PC-9 (cell line): ENCODE measurements at regions of chr3 and their contacts with region 1.

Region 1: DNA sequence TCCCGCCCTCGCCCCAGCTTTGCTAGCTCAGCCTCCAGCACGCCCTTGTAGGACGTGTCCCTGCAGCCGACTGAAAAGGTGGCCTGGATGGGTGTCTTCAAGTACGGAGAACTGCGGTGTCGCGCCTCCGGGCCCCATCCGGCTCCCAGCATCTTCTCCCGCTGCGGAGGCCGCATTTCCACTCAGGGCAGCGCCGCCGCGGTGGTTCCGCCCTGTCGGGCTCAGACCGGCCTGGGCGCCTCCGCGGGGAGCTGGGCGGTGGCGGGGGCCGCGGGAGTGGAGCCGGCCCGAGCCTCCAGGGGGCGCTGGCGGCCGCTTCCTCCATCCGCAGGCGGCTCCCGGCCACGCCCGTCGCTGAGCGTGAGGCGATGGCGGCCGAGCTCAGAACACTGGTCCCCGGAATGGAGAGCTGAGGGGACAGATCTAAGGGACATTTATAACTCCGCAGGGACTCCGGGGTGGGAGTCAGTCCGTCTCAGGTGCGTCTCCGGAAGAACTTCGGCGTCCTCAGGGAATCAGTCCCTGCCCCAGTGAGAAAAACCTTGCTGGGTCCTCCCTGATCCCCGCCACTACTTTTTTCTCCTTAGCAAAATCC is 13.6 kb upstream of the SMCO1 start:
- DNase-seq: peak; percentile 59 to 93
- H3K4me3 ChIP-seq: peak overlapping the region; percentile 66
- H3K27ac ChIP-seq: no peak overlapping the region
- H3K4me1 ChIP-seq: no peaks in the 10 kb centered on the region
- H3K27me3 ChIP-seq: no peaks in the 10 kb centered on the region
- CTCF ChIP-seq: peak; percentile 89

Region 2: GRCh38 chr3:195956571-195956970 is 572.2 kb before region 1 on chr3:
- CTCF ChIA-PET with region 1: no interaction called
- POLR2A ChIA-PET with region 1: interaction called, 20 read pairs
- intact Hi-C with region 1: no loop called
- DNase-seq: peak in 1 of 2 experiments; percentile 29
- H3K4me3 ChIP-seq: no peak overlapping the region
- H3K27ac ChIP-seq: no peak overlapping the region
- H3K4me1 ChIP-seq: peaks cover 13% of the 10 kb centered on the region
- H3K27me3 ChIP-seq: no peaks in the 10 kb centered on the region
- CTCF ChIP-seq: no peak

Region 3: DNA sequence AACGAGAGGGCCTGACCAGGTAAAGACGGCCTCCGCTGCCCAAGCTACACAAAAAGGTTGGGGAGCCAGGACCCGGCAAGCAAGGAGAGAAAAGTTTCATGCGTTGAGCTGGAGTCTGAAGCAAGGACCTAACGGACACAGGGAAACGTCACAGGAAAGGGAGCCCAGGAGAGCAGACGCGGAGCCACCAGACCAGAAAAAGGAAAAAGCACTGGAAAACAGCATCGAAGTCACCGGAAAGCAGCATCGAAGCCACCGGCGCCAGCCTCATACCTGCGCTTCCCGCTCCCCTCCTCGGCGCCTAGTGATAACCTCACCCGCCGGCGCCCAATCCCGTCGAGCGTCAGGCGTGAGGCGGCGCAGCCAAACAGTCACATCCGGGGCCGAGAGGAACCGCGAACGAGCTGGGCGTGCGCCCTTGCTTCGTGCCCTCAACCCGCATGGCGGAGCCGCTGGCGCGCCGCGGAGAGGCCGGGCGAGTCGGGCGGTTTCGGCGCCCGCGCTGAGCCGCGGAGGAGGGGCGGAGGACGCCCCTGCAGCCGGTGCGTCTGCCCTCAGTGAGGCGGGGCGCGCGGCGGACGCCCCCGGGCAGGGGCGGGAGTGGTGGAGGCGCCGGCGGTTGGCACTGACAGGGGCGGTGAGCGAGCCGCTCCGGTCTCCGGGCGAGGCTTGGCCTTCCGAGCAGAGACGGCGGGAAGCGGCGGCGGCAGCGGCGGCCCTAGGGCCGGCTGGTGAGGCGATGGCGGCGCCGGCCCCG is 39.7 kb after region 1 on chr3 and contains the starts of genes FBXO45 and WDR53:
- CTCF ChIA-PET with region 1: no interaction called
- POLR2A ChIA-PET with region 1: no interaction called
- intact Hi-C with region 1: loop called (anchors 2 kb)
- DNase-seq: peak; percentile 90 to 98
- H3K4me3 ChIP-seq: peak within 1 kb of the TSS; percentile 75
- H3K27ac ChIP-seq: peak within 1 kb of the TSS; percentile 30
- H3K4me1 ChIP-seq: peaks cover 34% of the 10 kb centered on the region
- H3K27me3 ChIP-seq: no peaks in the 10 kb centered on the region
- CTCF ChIP-seq: no peak
- total RNA-seq, gene FBXO45: 16.5 and 21.3 TPM in 2 replicates
- total RNA-seq, gene WDR53: 33.5 and 34.8 TPM in 2 replicates

Region 4: DNA sequence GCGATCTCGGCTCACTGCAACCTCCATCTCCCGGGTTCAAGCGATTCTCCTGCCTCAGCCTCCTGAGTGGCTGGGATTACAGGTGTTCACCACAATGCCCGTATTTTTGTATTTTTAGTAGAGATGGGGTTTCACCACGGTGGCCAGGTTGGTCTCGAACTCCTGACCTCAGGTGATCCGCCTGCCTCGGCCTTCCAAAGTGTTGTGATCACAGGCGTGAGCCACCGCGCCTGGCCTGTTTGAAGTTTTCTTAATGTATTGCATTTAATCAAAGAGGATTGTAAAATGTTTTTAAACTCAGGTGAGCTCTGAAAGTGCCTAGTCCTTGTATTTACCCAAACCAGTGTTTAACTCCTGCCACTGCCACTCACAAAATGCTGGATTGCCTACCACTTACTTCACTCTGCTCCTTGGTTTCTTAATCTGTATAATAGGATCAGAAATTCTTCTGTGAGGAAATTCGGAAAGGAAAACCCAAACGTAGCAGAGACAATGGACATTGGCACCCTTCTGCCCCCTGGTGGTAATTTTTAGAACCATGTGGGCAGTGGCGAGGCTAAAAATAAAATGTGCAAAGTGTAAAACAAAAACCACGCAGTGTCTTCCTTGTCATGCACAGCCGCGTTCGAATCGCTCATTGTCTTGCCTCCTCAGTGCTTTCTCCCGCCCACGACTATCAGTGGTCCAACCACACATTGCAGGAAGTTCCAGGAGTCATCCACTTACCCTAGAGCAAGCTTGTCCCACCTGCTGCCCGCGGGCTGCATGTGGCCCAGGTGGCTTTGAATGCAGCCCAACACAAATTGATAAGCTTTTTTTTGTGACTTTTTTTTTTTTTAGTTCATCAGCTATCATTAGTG is 156.0 kb after region 1 on chr3:
- CTCF ChIA-PET with region 1: interaction called, 3 read pairs
- POLR2A ChIA-PET with region 1: no interaction called
- intact Hi-C with region 1: loop called (anchors 2 kb)
- DNase-seq: peak; percentile 45 to 69
- H3K4me3 ChIP-seq: no peak overlapping the region
- H3K27ac ChIP-seq: no peak overlapping the region
- H3K4me1 ChIP-seq: 0 out of 2 replicates have a peak, but pooled peaks cover 9% of the 10 kb centered on the region
- H3K27me3 ChIP-seq: no peaks in the 10 kb centered on the region
- CTCF ChIP-seq: peak; percentile 97

Region 5: DNA sequence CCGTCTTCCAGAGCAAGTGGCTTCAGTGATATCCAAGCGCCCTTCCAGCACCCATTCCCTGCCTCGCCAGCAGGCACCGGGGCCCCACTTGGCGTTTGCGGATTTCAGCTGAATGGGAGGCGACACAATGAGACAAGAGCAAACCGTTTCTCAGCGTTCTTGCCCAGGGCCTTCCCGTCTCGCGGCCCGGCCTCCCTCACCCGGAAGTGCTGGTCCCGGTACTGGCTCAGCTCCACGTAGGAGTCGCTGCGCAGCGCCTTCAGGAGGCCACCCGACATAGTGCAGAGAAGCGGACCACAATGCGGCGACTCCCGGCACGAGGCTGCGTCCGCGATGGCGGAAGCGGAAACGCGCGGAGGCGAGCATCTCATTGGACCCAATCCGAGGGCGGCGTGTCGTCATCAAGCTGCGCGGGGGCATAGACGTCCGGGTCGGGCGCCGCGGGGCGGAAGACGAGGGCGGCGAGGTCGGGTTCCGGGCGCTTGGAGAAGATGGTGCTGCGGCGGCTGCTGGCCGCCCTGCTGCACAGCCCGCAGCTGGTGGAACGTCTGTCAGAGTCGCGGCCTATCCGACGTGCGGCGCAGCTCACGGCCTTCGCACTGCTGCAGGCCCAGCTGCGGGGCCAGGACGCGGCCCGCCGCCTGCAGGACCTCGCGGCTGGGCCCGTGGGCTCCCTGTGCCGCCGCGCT is 413.6 kb after region 1 on chr3 and contains the start of gene NCBP2:
- CTCF ChIA-PET with region 1: interaction called, 3 read pairs
- POLR2A ChIA-PET with region 1: no interaction called
- intact Hi-C with region 1: loop called (anchors 10 kb)
- DNase-seq: peak; percentile 95 to 100
- H3K4me3 ChIP-seq: peak within 1 kb of the TSS; percentile 92
- H3K27ac ChIP-seq: peak within 1 kb of the TSS; percentile 90
- H3K4me1 ChIP-seq: peaks cover 20% of the 10 kb centered on the region
- H3K27me3 ChIP-seq: no peaks in the 10 kb centered on the region
- CTCF ChIP-seq: peak; percentile 69
- total RNA-seq, gene NCBP2: 83.8 and 91.8 TPM in 2 replicates

Region 6: GRCh38 chr3:197021231-197021630 is 492.5 kb after region 1 on chr3:
- CTCF ChIA-PET with region 1: interaction called, 17 read pairs
- POLR2A ChIA-PET with region 1: no interaction called
- intact Hi-C with region 1: no loop called
- DNase-seq: no peak
- H3K4me3 ChIP-seq: no peak overlapping the region
- H3K27ac ChIP-seq: no peak overlapping the region
- H3K4me1 ChIP-seq: no peaks in the 10 kb centered on the region
- H3K27me3 ChIP-seq: no peaks in the 10 kb centered on the region
- CTCF ChIP-seq: no peak

Region 7: GRCh38 chr3:197186887-197187588 is 658.3 kb after region 1 on chr3:
- CTCF ChIA-PET with region 1: no interaction called
- POLR2A ChIA-PET with region 1: no interaction called
- intact Hi-C with region 1: loop called (anchors 10 kb)
- DNase-seq: peak; percentile 8 to 69
- H3K4me3 ChIP-seq: no peak overlapping the region
- H3K27ac ChIP-seq: no peak overlapping the region
- H3K4me1 ChIP-seq: peaks cover 16% of the 10 kb centered on the region
- H3K27me3 ChIP-seq: no peaks in the 10 kb centered on the region
- CTCF ChIP-seq: peak; percentile 95